ENCODE measurements at regions of chr17 and their contacts with region 1.

Region 1: DNA sequence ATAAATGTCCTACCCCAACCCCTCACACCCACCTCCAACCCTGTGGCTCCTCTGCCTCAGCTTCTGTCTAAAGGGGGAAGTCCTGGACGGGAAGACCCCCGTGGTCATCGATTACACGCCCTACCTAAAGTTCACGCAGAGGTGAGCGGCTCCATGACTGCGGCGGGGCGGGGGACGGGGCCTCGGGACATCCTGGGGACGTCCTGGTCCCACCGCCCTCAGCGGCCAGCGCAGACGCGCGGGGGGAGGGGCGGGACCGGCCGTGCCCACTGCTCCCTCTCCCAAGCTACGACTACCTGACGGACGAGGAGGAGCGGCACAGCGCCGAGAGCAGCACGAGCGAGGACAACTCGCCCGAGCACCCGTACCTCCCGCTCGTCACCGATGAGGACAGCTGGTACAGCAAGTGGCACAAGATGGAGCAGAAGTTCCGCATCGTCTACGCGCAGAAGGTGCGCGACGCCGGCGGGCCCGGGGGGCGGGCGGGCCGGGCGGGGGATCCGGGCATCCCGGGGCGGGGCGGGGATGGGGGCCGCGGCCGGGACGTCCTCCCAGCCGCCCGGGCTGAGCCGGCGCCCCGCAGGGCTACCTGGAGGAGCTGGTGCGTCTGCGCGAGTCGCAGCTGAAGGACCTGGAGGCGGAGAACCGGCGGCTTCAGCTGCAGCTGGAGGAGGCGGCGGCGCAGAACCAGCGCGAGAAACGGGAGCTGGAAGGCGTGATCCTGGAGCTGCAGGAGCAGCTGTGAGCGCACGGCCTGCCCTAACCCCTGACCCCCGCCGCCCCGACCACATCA is 6.7 kb downstream of the RUNDC3A start:
- DNase-seq: no peak
- H3K4me3 ChIP-seq: peak overlapping the region; percentile 19
- CTCF ChIP-seq: no peak

Region 2: GRCh38 chr17:44205962-44206824 is 108.9 kb before region 1 on chr17:
- in situ Hi-C with region 1: loop called (anchors 5 kb)
- DNase-seq: no peak
- H3K4me3 ChIP-seq: no peak overlapping the region
- CTCF ChIP-seq: peak; percentile 34

Region 3: DNA sequence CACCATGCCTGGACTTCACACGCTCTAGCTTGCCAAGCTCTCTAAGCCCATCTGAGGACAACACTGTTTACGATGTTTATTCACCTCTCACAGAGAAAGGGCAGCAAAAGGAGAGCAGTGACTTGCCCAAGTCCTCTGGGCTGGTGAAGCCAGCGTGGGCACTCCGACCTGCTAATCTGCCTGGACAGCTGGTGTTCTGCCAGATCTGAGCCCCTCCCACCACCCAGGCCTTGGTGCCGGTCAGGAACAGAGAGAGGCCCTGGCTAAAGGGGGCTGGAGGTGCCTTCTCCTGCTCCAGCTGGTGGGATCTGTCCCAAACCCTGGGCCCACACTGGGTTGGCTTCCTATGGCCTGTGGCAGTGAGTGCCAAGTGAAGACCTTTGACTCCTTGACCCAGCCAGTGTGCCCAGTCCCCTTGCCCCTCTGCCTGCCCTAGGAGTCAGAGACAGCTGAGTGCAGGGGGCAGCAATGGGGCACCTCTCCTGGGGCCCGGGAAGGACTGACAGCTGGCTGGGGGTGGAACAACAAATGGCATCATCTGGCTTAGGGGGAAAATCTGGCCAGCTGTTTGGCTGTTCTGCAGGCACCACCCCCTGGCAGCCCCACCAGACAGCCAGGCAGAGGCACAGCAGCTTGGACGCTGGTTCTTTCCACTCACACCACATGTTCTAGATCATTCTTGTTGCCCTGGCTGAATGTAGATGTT is 45.4 kb before region 1 on chr17:
- in situ Hi-C with region 1: loop called (anchors 5 kb)
- DNase-seq: no peak
- H3K4me3 ChIP-seq: no peak overlapping the region
- CTCF ChIP-seq: no peak